Natural killer cell (primary cell): ENCODE measurements at regions of chr1 and their contacts with region 1.

Region 1: GRCh38 chr1:44835738-44836675 is 7.0 kb downstream of the PTCH2 start:
- DNase-seq: peak; percentile 79 to 90
- ATAC-seq: peak; percentile 90 to 99 (median 97)
- H3K4me3 ChIP-seq: no peak overlapping the region
- H3K4me3 Mint-ChIP-seq: no peak overlapping the region
- H3K27ac ChIP-seq: no peak overlapping the region
- H3K27ac Mint-ChIP-seq: peak overlapping the region in 1 of 2 donors; percentile 63
- H3K4me1 ChIP-seq: peaks cover 6% of the 10 kb centered on the region
- H3K4me1 Mint-ChIP-seq: peaks cover 7% of the 10 kb centered on the region in 2 donors
- H3K27me3 ChIP-seq: no peaks in the 10 kb centered on the region
- H3K27me3 Mint-ChIP-seq: peaks cover under 1 to 5% of the 10 kb centered on the region in 2 donors
- CTCF ChIP-seq: peak; percentile 77

Region 2: DNA sequence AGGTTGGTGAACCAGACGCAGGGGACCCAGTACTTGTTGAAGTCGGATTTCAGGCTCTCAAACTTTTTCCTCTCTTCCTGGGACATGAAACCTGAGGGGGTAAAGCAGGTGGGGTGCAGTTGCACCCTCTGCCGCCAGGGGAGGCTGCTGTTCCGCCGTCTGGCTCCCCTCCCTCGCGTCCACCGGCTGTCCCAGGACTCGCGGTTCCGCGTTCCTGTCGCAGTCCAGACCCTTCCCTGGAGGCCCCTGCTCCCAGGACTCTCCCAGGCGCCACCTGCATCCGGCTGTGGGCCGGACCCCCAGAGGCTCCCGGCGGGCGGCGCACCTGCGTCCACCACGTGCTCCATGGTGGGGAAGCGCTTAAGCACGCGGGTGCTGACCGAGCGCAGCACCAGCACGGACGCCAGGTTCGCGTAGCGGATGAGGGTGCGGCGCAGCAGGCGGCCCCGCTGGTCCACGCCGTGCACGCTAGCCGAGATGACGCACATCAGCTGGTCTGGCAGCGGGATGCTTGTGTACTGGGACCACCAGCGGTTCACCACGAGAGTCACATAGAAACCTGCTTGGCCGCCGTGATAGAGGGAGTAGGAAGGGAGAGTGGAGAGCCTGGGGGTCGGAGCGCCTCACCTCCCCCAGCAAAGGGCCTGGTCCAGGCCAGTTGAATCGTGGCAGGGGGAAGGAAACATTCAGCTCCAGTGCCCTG is 49.7 kb before region 1 on chr1:
- intact Hi-C with region 1: loop called (anchors 5 kb)
- DNase-seq: peak; percentile 74 to 91
- ATAC-seq: peak; percentile 81 to 89 (median 82)
- H3K4me3 ChIP-seq: peak overlapping the region; percentile 49
- H3K4me3 Mint-ChIP-seq: peak overlapping the region; percentile 75
- H3K27ac ChIP-seq: peak overlapping the region; percentile 20
- H3K27ac Mint-ChIP-seq: peak overlapping the region; percentile 62 to 80
- H3K4me1 ChIP-seq: peaks cover 31% of the 10 kb centered on the region
- H3K4me1 Mint-ChIP-seq: peaks cover 21 to 26% of the 10 kb centered on the region in 2 donors
- H3K27me3 ChIP-seq: no peaks in the 10 kb centered on the region
- H3K27me3 Mint-ChIP-seq: no peaks in the 10 kb centered on the region
- CTCF ChIP-seq: peak; percentile 99

Region 3: GRCh38 chr1:44903011-44903680 is 67.1 kb after region 1 on chr1:
- intact Hi-C with region 1: no loop called
- DNase-seq: no peak
- ATAC-seq: no peak
- H3K4me3 ChIP-seq: no peak overlapping the region
- H3K4me3 Mint-ChIP-seq: no peak overlapping the region
- H3K27ac ChIP-seq: no peak overlapping the region
- H3K27ac Mint-ChIP-seq: no peak overlapping the region
- H3K4me1 ChIP-seq: no peaks in the 10 kb centered on the region
- H3K4me1 Mint-ChIP-seq: peaks cover 0 to 4% of the 10 kb centered on the region in 2 donors
- H3K27me3 ChIP-seq: no peaks in the 10 kb centered on the region
- H3K27me3 Mint-ChIP-seq: no peaks in the 10 kb centered on the region
- CTCF ChIP-seq: no peak